Activated CD4-positive, alpha-beta T cell treated with anti-CD3 and anti-CD28 coated beads for 36 hours (primary cell): ENCODE measurements at regions of chr1 and their contacts with region 1.

Region 1: GRCh38 chr1:19762175-19762779 is 37.4 kb downstream of the TMCO4 start:
- DNase-seq: peak; percentile 62
- ATAC-seq: no peak
- H3K4me3 Mint-ChIP-seq: no peak overlapping the region
- H3K27ac Mint-ChIP-seq: no peak overlapping the region
- H3K4me1 Mint-ChIP-seq: peaks cover 19% of the 10 kb centered on the region
- H3K27me3 Mint-ChIP-seq: no peaks in the 10 kb centered on the region

Region 2: GRCh38 chr1:19811206-19811851 is 49.1 kb after region 1 on chr1:
- CTCF ChIA-PET with region 1: interaction called, 7 read pairs
- POLR2A ChIA-PET with region 1: no interaction called
- intact Hi-C with region 1: loop called (anchors 1 kb)
- DNase-seq: peak; percentile 81
- ATAC-seq: peak; percentile 85
- H3K4me3 Mint-ChIP-seq: no peak overlapping the region
- H3K27ac Mint-ChIP-seq: no peak overlapping the region
- H3K4me1 Mint-ChIP-seq: no peaks in the 10 kb centered on the region
- H3K27me3 Mint-ChIP-seq: no peaks in the 10 kb centered on the region

Region 3: GRCh38 chr1:19840228-19840627 is 78.0 kb after region 1 on chr1:
- CTCF ChIA-PET with region 1: interaction called, 3 read pairs
- POLR2A ChIA-PET with region 1: no interaction called
- intact Hi-C with region 1: loop called in 1 of 2 experiments (anchors 2 kb)
- DNase-seq: no peak
- ATAC-seq: peak; percentile 47
- H3K4me3 Mint-ChIP-seq: no peak overlapping the region
- H3K27ac Mint-ChIP-seq: no peak overlapping the region
- H3K4me1 Mint-ChIP-seq: peaks cover 18% of the 10 kb centered on the region
- H3K27me3 Mint-ChIP-seq: peaks cover 35% of the 10 kb centered on the region

Region 4: GRCh38 chr1:20047096-20047495 is 284.8 kb after region 1 on chr1:
- CTCF ChIA-PET with region 1: no interaction called
- POLR2A ChIA-PET with region 1: no interaction called
- intact Hi-C with region 1: no loop called
- DNase-seq: no peak
- ATAC-seq: no peak
- H3K4me3 Mint-ChIP-seq: no peak overlapping the region
- H3K27ac Mint-ChIP-seq: no peak overlapping the region
- H3K4me1 Mint-ChIP-seq: peaks cover 4% of the 10 kb centered on the region
- H3K27me3 Mint-ChIP-seq: no peaks in the 10 kb centered on the region